ENCODE measurements at regions of chr4 and their contacts with region 1.

Region 1: DNA sequence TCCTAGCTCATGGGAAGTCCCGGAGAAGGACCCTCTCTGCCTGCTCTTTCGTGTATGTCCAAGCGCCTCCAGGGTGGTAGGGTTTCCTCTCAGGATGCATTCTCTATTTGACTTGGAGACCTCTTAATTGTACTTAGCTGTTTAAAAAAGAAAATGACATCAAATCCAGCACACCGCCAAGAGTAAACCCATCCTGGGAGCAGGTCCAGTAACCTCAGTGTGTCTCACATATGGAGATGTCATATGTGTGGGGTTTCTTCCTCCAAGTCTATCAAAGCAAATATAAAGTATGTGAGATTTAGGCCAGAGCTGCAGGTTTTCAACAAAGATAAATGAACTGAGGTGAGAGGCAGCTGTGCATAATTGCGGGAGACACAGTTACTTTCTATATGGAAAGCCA is 209.4 kb upstream of the ANXA3 start:
- DNase-seq: no peak
- H3K4me3 ChIP-seq: no peak overlapping the region
- H3K27ac ChIP-seq: no peak overlapping the region
- H3K4me1 ChIP-seq: no peaks in the 10 kb centered on the region
- H3K27me3 ChIP-seq: no peaks in the 10 kb centered on the region
- CTCF ChIP-seq: no peak
- EP300 ChIP-seq: no peak
- POLR2A ChIP-seq: no peak

Region 2: DNA sequence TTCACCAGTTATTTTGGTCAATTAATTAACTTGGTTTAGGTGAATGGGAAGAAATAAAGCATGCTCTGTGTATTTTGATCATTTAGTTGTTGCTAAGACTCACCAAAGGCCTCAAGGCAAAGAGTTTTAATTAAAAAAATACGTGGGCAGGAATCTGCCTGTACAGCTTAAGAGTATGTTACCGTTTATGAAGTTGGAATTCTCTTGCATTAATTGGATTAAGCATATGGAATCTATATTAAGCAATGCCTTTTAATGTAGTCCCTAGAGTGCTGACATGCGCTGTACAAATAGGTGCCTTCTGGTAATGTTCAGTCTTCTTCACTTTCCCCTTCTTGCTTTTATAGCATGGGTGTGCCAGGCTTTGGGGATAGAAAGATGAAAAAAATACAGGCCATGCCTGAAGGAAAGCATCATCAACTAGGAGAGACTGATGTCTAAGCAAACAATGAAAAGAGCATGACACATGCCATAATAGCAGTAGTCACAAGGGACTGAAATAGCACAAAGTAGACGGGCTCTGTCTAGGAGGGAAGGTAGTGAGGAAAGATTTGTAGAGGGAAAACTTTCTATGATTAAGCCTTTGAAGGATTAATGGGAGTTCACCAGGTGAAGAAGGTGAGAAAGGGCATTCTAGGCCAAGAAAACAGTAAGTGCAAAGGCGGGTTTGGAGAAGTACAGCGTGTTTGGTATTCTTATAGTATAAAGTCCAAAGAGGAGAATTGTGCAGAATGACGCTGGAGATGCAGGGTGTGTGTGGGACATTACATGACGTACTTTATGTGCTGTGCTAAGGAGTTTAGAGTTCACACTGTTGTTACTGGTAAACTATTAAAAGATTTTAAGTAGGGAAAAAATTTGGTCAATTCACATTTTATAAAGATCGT is 16.6 kb before region 1 on chr4:
- in situ Hi-C with region 1: no loop called
- intact Hi-C with region 1: loop called (anchors 1 kb)
- DNase-seq: peak; percentile 42
- H3K4me3 ChIP-seq: no peak overlapping the region
- H3K27ac ChIP-seq: no peak overlapping the region
- H3K4me1 ChIP-seq: peaks cover 0 to 4% (median 0%) of the 10 kb centered on the region in 4 donors
- H3K27me3 ChIP-seq: no peaks in the 10 kb centered on the region
- CTCF ChIP-seq: no peak
- EP300 ChIP-seq: no peak
- POLR2A ChIP-seq: no peak

Region 3: GRCh38 chr4:78464265-78464664 is 122.1 kb after region 1 on chr4:
- in situ Hi-C with region 1: no loop called
- intact Hi-C with region 1: no loop called
- DNase-seq: no peak
- H3K4me3 ChIP-seq: no peak overlapping the region
- H3K27ac ChIP-seq: no peak overlapping the region
- H3K4me1 ChIP-seq: no peaks in the 10 kb centered on the region
- H3K27me3 ChIP-seq: no peaks in the 10 kb centered on the region
- CTCF ChIP-seq: no peak
- EP300 ChIP-seq: no peak
- POLR2A ChIP-seq: no peak